Posterior vena cava (tissue), 2 donors: ENCODE measurements at regions of chr5 and their contacts with region 1.

Region 1: DNA sequence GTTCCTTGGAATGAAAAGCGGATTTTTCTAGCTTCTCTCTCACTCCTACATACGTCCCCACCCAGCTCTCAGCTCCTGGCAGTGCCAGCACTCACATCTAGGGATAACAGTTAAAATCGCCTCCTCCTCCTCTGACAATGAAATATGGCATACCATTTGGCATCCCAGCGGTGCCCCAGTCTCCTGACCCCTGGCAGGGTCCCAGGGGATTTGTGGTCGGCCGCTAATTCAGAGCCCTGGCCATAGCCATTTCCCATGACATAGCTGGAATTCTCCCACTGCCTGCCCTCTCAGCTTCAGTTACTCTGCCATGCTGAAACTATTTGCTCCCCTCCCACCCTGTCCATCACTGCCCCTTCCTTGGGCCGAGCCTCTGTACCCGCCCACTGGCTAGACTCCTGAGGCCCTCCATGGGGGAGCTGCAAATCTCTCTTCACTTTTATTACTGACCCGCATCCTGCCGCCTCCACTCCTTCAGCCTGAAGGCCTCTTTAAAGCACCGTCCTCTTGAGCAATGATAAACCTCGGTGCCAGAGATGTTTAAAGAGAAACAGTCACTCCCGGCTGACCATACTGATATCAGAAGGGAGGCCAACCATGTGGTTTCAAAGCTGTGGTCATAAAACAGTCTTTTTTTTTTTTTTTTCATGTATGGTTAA is 139.8 kb downstream of the SLIT3 start:
- DNase-seq: peak; percentile 88

Region 2: DNA sequence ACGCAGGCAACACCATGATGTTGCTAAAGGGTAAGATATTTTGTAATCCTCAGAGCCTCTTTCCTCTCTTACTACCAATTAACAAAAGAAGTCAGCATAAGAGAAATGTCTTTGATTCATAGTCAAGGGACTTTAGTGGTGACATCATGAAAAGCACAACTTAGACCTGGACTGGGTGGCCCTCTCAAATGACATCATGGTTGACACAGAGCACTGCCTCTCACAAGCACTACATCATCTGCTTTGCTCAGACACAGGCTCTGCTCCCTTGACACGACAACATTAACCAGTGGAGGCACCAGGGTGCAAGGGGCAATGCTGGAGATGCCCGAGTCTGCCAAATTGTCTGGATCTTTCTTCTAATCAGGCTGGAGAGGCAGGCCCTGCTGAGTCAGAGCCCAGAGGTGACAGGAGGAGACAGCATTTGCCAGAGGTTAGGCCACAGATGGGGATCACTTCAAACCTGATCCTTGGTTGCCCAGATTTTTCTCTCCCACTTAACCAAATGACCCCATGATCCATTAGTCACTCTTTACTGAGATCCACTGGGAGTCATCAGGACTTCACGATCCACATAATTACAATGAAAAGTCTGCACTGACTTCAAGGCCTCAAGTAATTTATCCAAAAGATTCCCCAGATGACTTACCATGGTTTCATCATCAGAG is 34.6 kb before region 1 on chr5:
- intact Hi-C with region 1: loop called in 1 of 2 experiments (anchors 1 kb)
- DNase-seq: peak; percentile 83

Region 3: DNA sequence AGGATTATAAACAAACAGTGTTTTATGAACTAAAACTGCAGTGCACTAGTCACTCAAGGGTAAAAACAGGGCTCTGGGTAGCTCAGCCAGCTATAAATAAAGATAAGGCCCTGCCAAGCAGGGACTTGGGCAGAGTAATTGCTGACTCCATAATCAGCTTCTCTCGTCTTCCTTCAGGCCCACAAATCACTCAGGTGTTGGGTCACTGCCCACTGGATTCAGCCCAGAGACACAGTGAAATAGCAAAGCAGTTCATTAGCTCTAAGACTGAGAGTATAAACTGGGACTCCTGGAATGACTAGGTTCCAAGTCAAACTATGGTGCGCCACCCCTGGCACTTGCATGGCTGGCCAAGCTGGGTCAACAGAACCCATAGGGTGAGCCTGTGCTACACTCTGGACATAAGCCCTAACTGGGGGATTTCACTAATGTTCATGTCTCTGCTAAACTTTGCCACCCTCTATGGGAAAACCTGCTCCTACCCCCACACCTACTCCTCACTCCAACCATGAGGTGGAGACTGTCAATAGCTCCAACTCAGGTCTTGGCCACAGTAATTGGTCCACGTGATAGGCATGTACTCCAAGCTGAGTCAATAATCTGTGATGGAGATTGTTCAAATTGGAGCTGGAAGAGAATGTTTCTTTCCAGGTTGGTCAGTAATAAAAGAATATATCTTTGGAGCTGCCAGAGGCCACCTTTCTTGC is 18.7 kb before region 1 on chr5:
- intact Hi-C with region 1: no loop called
- DNase-seq: peak; percentile 85

Region 4: GRCh38 chr5:169296419-169297143 is 135.4 kb after region 1 on chr5:
- intact Hi-C with region 1: loop called in 1 of 2 experiments (anchors 10 kb)
- DNase-seq: no peak